Spleen (tissue), 13 donors: ENCODE measurements at regions of chr2 and their contacts with region 1.

Region 1: GRCh38 chr2:24231461-24231881 is 56.6 kb downstream of the FAM228A start:
- DNase-seq: no peak
- H3K4me3 ChIP-seq: no peak overlapping the region
- H3K27ac ChIP-seq: no peak overlapping the region
- H3K4me1 ChIP-seq: no peaks in the 10 kb centered on the region
- H3K27me3 ChIP-seq: no peaks in the 10 kb centered on the region
- CTCF ChIP-seq: no peak
- POLR2A ChIP-seq: no peak

Region 2: GRCh38 chr2:24382363-24383073 is 151.0 kb after region 1 on chr2:
- intact Hi-C with region 1: loop called (anchors 10 kb)
- DNase-seq: peak; percentile 79
- H3K4me3 ChIP-seq: no peak overlapping the region
- H3K27ac ChIP-seq: no peak overlapping the region
- H3K4me1 ChIP-seq: peaks cover 0 to 8% (median 5%) of the 10 kb centered on the region in 6 donors
- H3K27me3 ChIP-seq: no peaks in the 10 kb centered on the region
- CTCF ChIP-seq: peak in 10 of 11 experiments; percentile 18 to 89 (median 80)
- POLR2A ChIP-seq: no peak

Region 3: GRCh38 chr2:24515831-24516230 is 284.4 kb after region 1 on chr2:
- intact Hi-C with region 1: no loop called
- DNase-seq: no peak
- H3K4me3 ChIP-seq: no peak overlapping the region
- H3K27ac ChIP-seq: no peak overlapping the region
- H3K4me1 ChIP-seq: peaks cover 23 to 84% (median 43%) of the 10 kb centered on the region in 6 donors
- H3K27me3 ChIP-seq: no peaks in the 10 kb centered on the region
- CTCF ChIP-seq: no peak
- POLR2A ChIP-seq: no peak